PC-9 (cell line): ENCODE measurements at regions of chr13 and their contacts with region 1.

Region 1: GRCh38 chr13:113816946-113817859 is 46.7 kb downstream of the GAS6 start:
- DNase-seq: peak; percentile 68 to 83
- H3K4me3 ChIP-seq: no peak overlapping the region
- H3K27ac ChIP-seq: no peak overlapping the region
- H3K4me1 ChIP-seq: peaks cover 41% of the 10 kb centered on the region
- H3K27me3 ChIP-seq: no peaks in the 10 kb centered on the region
- CTCF ChIP-seq: peak; percentile 92

Region 2: DNA sequence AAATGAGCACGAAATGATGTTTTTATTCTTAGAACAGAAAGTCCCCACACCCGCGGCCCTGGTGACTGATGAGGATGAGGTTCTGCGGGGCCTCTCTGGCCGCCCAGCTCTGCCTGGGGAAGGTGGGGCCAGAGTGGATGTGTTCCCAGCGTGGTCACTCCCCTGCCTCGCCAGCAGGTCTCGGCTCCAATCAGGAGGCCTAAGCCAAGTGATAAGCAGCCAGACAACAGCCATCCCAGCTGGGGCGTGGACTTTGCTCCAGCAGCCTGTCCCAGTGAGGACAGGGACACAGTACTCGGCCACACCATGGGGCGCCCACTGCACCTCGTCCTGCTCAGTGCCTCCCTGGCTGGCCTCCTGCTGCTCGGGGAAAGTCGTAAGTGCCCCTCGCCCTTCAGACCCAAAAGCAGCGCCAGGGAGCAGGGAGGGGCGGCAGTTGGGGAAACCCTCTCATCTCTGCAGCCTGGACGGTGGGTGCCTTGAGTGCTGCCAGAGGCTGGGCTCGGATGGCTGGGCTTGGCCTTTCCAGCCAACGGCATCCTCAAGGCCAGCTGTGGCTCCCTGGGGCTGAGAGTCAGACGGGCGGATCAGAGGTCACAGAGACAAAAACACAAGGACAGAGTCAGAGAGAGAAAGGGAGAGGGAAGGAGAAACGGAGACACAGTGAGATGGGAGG is 694.5 kb before region 1 on chr13 and contains the start of gene F10:
- CTCF ChIA-PET with region 1: no interaction called
- POLR2A ChIA-PET with region 1: no interaction called
- intact Hi-C with region 1: no loop called
- DNase-seq: no peak
- H3K4me3 ChIP-seq: no peak within 1 kb of the TSS
- H3K27ac ChIP-seq: no peak within 1 kb of the TSS
- H3K4me1 ChIP-seq: no peaks in the 10 kb centered on the region
- H3K27me3 ChIP-seq: peaks cover 90% of the 10 kb centered on the region
- CTCF ChIP-seq: no peak
- total RNA-seq, gene F10: not detected in 2 replicates

Region 3: DNA sequence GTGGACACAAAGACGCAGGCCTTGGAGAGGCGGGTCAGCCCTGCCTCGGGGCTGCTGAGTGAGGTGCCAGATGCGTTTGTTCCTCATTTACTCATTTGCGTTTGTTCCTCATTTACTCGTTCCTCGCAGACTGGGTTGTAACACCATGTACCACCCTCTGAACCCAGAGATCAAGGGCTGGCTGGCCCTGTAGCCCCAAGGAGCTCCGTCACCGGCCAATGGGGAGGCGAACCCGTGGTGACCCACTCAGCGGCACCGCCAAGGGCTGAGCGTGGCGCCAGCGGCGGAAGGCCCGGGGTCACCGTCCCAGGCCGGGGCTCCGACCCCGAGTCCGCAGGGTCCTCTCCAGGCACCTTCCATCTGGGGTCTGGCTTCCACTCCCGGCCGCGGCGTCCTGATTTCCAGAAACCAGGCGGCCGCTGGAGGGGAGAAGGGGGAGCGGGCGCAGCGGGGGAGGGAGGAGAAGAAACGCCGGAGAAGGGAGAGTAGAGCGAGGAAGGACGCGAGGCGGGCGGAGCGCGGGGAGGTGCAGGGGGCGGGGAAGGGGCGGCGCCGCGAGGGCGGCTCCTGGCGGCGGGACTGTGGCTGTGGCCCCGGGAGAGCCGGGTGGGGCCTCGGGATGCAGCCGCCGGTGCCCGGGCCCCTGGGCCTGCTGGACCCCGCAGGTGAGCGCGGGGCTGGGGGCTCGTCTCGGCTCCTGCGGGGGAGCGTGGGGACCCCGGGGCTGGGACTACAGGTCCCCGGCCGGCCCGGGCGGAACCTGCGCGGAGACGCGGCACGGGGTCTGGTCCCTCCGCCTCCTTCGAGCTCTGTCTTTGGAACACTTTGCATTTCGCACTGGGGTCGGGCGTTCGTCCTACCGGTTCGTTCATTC is 58.3 kb before region 1 on chr13 and contains the start of gene TMEM255B:
- CTCF ChIA-PET with region 1: no interaction called
- POLR2A ChIA-PET with region 1: interaction called, 17 read pairs
- intact Hi-C with region 1: no loop called
- DNase-seq: peak in 1 of 2 experiments; percentile 64
- H3K4me3 ChIP-seq: peak within 1 kb of the TSS; percentile 44; the same call in 1 of the 2 replicates
- H3K27ac ChIP-seq: no peak within 1 kb of the TSS
- H3K4me1 ChIP-seq: peaks cover 13% of the 10 kb centered on the region
- H3K27me3 ChIP-seq: peaks cover 75% of the 10 kb centered on the region
- CTCF ChIP-seq: no peak
- total RNA-seq, gene TMEM255B: 0.53 and 0.61 TPM in 2 replicates

Region 4: GRCh38 chr13:113837554-113838355 is 20.6 kb after region 1 on chr13:
- CTCF ChIA-PET with region 1: no interaction called
- POLR2A ChIA-PET with region 1: no interaction called
- intact Hi-C with region 1: loop called (anchors 2 kb)
- DNase-seq: peak; percentile 73 to 90
- H3K4me3 ChIP-seq: no peak overlapping the region
- H3K27ac ChIP-seq: no peak overlapping the region
- H3K4me1 ChIP-seq: peaks cover 33% of the 10 kb centered on the region
- H3K27me3 ChIP-seq: no peaks in the 10 kb centered on the region
- CTCF ChIP-seq: no peak

Region 5: DNA sequence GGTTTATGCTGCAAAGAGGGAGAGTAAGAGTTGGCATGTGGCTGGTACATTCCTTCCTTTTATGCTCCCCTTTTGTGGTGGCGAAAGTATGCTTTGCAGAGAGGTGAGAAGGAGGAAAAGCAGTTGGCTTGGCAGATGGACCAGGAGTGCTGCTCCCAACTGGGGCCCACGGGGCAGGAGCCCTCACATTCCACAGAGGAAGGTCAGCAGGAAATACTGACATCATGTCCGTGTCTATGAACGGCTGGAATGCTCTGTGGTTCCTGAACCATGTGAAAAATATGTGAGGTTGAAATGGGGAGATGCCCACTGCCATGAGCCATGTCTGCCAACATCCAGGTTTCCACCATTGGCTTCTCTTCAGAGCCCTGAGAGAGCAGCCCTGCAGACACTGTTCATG is 80.0 kb after region 1 on chr13:
- CTCF ChIA-PET with region 1: no interaction called
- POLR2A ChIA-PET with region 1: no interaction called
- intact Hi-C with region 1: loop called (anchors 2 kb)
- DNase-seq: peak; percentile 88 to 94
- H3K4me3 ChIP-seq: no peak overlapping the region
- H3K27ac ChIP-seq: peak overlapping the region; percentile 71
- H3K4me1 ChIP-seq: peaks cover 29% of the 10 kb centered on the region
- H3K27me3 ChIP-seq: no peaks in the 10 kb centered on the region
- CTCF ChIP-seq: no peak

Region 6: DNA sequence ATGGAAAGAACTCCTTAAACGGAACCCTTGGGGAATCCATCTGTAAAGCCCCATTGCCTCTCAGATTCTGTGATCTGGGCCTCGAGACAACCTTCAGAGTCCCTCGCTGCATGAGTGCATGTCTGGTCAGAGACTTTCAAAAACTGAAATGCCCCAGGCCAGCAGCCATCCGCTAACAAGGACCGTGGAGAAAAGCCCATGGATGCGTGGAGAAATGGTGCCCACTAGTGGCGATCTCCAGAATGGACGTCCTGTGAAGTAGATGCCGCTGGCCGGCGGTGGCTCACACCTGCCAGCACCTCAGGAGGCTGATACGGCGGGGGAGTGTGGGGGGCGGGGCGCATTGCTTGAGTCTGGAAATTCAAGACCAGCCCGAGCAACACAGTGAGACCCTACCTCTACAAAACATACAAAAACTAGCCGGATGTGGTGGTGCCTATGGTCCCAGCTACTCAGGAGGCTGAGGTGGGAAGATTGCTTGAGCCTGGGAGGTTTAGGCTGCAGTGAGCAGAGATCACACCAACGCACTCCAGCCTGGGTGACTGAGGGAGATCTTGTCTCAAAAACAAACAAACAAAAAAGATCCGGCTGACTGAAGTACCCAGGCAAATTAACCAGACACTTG is 409.6 kb after region 1 on chr13:
- CTCF ChIA-PET with region 1: interaction called, 3 read pairs
- POLR2A ChIA-PET with region 1: no interaction called
- intact Hi-C with region 1: loop called (anchors 1 kb)
- DNase-seq: peak; percentile 76 to 87
- H3K4me3 ChIP-seq: no peak overlapping the region
- H3K27ac ChIP-seq: no peak overlapping the region
- H3K4me1 ChIP-seq: 0 out of 2 replicates have a peak, but pooled peaks cover 11% of the 10 kb centered on the region
- H3K27me3 ChIP-seq: peaks cover 9% of the 10 kb centered on the region; the same call in 1 of the 2 replicates
- CTCF ChIP-seq: peak; percentile 95